ENCODE measurements at regions of chr14 and their contacts with region 1.

Region 1: DNA sequence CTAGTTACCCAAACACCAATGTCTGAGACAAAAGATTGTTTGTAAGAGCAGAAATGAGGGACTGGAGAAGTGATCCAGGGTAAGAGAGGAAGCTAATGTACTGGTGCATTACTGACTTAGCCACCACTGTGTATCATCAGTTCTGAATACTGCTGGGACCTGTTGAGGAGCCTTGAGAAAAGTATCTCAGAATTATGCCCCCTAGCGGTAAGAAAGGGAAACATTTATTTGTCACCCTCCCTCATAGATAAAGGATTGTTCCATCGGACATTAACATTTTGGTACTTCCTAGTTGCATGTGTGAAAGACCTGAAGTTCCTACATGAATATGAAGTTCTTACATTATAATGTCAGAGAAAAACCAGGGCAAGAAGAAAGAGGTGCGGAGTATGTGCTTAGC is 612.5 kb downstream of the FSCB start:
- DNase-seq: no peak
- H3K4me3 ChIP-seq: no peak overlapping the region
- H3K27ac ChIP-seq: no peak overlapping the region
- H3K4me1 ChIP-seq: no peaks in the 10 kb centered on the region
- H3K27me3 ChIP-seq: no peaks in the 10 kb centered on the region
- CTCF ChIP-seq: peak in 1 of 2 donors; percentile 9
- POLR2A ChIP-seq: no peak

Region 2: DNA sequence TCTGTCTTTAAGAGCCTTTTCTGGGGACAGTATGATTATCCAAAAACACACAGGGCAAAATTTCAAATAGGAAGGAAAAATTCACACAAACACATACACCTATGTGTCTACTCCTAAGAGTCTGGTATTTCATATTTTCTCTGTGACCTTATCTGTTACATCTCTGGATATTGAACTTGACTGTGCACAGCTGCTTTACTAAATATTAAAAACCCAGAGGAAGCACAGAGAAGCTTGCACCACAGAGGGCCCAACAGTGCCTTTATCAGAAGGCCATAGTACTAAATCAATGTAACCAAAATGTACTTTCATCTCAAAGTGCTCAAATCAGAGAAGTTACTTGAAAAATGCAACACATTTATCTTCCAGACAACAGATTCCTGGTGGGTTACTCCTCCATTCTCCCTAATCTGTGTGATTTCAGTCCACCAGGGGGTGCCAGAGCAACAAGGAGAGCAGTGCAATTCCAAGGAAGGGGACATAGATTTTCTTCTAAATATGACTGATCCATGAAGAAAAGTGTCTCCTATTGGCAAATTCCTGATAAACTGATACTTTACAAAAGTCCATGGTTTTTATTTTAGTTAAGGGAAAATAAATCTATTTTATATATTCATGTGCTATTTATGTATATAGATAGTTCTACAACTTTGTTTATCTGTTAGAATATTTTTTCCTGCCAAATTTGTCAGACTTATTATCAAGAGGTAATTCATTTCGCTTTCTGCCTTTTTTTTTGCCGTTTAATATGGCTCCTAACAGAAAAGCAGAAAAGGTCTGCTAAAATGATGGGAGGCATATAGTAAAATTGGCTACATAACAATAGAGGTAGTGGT is 1670.3 kb before region 1 on chr14:
- CTCF ChIA-PET with region 1: no interaction called
- POLR2A ChIA-PET with region 1: no interaction called
- dilution Hi-C with region 1: no loop called
- intact Hi-C with region 1: loop called (anchors 10 kb)
- DNase-seq: peak; percentile 47
- H3K4me3 ChIP-seq: no peak overlapping the region
- H3K27ac ChIP-seq: no peak overlapping the region
- H3K4me1 ChIP-seq: no peaks in the 10 kb centered on the region
- H3K27me3 ChIP-seq: no peaks in the 10 kb centered on the region
- CTCF ChIP-seq: peak; percentile 64 to 65
- POLR2A ChIP-seq: no peak